CD14-positive monocyte (primary cell): ENCODE measurements at regions of chr4 and their contacts with region 1.

Region 1: DNA sequence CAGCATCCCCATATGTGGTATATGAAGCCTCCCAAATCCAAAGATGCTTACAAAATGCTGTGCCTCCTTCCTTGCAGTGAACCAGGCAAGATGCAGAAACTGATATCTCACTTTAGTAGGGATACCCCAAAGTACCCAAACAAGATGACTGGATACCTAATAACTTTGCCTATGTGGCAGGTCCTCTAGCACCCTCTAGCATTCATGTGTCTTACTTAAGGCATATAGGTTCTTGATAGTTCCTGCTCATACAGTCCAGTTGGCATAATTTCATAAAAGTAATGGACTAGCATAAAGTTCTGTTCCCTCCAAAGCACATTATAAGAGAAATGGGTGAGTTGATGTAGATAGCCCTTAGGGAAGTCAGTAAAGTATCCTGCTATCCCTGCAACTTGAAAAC is 36.8 kb upstream of the SPP1 start:
- DNase-seq: no peak
- H3K4me3 ChIP-seq: no peak overlapping the region
- H3K4me3 Mint-ChIP-seq: no peak overlapping the region
- H3K27ac ChIP-seq: no peak overlapping the region
- H3K27ac Mint-ChIP-seq: no peak overlapping the region
- H3K4me1 ChIP-seq: peaks cover 6 to 10% of the 10 kb centered on the region in 2 donors
- H3K4me1 Mint-ChIP-seq: peaks cover 11% of the 10 kb centered on the region
- H3K27me3 ChIP-seq: no peaks in the 10 kb centered on the region
- H3K27me3 Mint-ChIP-seq: no peaks in the 10 kb centered on the region
- CTCF ChIP-seq: no peak

Region 2: GRCh38 chr4:87926554-87927098 is 12.1 kb before region 1 on chr4:
- intact Hi-C with region 1: loop called (anchors 1 kb)
- DNase-seq: no peak
- H3K4me3 ChIP-seq: no peak overlapping the region
- H3K4me3 Mint-ChIP-seq: no peak overlapping the region
- H3K27ac ChIP-seq: no peak overlapping the region
- H3K27ac Mint-ChIP-seq: no peak overlapping the region
- H3K4me1 ChIP-seq: no peaks in the 10 kb centered on the region
- H3K4me1 Mint-ChIP-seq: no peaks in the 10 kb centered on the region
- H3K27me3 ChIP-seq: no peaks in the 10 kb centered on the region
- H3K27me3 Mint-ChIP-seq: peaks cover 6 to 7% (median 7%) of the 10 kb centered on the region in 3 donors
- CTCF ChIP-seq: no peak